BJ (cell line): ENCODE measurements at regions of chr12 and their contacts with region 1.

Region 1: GRCh38 chr12:15532364-15532977 is 210.2 kb downstream of the PTPRO start:
- DNase-seq: no peak
- H3K4me3 ChIP-seq: no peak overlapping the region
- H3K27me3 ChIP-seq: no peaks in the 10 kb centered on the region
- CTCF ChIP-seq: peak; percentile 66

Region 2: DNA sequence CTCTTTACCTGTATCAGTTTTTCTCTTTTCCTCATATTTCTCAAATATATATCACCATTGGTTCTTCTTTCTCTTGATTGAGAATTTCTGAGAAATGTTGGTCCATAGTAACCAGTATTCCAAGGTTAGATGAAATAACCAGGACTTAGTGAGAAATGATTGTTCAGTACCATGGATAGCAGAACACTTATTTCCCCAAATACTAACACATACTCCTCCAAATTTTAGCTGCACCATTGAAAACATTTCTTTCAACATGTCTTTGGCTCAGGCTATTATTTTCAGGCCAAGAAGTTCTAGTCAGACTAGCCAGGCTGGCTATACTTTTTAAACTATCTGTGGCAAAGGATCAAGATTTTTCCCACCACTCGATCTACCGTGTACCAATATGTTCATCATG is 96.9 kb before region 1 on chr12:
- CTCF ChIA-PET with region 1: no interaction called
- POLR2A ChIA-PET with region 1: no interaction called
- DNase-seq: no peak
- H3K4me3 ChIP-seq: no peak overlapping the region
- H3K27me3 ChIP-seq: no peaks in the 10 kb centered on the region
- CTCF ChIP-seq: no peak

Region 3: DNA sequence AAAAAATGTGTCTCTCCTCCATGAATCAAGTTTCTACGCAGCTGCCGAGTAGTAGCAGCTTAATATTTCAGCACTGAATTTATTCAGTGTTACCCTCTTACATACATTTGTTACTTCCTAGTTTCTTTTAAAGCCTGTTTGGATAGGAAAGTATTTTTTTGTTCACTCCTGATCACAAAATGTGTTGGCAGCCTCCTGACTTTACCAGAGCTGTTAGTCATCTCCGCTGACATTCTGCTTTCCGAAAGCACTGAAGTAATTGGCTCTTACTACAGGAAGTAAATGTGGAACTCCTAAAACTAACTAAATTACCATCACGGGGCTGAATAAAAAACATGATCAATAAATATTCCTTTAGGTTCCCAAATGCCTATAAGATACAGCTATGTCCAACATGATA is 31.2 kb after region 1 on chr12:
- CTCF ChIA-PET with region 1: interaction called, 24 read pairs
- POLR2A ChIA-PET with region 1: no interaction called
- DNase-seq: no peak
- H3K4me3 ChIP-seq: no peak overlapping the region
- H3K27me3 ChIP-seq: no peaks in the 10 kb centered on the region
- CTCF ChIP-seq: no peak

Region 4: DNA sequence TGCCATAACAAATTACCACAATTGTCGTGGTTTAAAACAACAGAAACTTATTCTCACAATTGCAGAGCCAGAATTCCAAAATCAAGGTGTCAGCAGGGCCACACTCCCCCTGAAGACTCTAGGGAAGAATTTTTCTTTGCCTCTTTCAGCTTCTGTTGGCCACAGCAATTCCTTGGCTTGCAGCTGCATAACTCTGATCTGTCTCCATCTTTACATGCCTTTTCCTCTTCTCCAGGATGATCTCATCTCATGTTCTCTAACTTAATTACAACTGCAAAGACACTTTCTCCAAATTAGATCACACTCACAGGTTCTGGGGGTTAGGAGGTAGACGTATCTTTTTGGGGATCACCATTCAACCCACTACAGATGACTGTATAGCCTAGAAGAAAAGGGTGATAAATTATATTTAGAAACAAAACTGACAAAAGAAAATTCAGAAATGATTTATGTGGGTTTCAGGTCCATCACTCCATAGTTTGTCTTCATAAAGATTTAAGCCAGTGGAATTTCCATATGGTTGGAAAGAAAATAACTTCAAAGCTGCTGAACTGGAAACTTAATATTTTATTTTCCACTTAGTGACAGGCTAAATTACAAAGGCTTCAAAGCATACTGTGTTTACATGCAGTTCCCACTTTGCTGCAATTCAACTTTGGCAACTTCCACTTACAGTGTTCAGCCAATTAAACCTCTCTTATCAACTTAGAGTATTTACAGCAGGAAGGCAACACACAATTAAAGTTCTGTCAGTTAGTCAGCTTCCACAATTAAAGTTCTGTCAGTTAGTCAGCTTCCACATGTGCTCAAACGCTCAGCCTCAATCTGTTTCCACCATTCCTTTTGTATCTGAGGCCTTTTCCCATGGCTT is 43.4 kb after region 1 on chr12:
- CTCF ChIA-PET with region 1: interaction called, 254 read pairs
- POLR2A ChIA-PET with region 1: no interaction called
- DNase-seq: no peak
- H3K4me3 ChIP-seq: no peak overlapping the region
- H3K27me3 ChIP-seq: no peaks in the 10 kb centered on the region
- CTCF ChIP-seq: no peak

Region 5: DNA sequence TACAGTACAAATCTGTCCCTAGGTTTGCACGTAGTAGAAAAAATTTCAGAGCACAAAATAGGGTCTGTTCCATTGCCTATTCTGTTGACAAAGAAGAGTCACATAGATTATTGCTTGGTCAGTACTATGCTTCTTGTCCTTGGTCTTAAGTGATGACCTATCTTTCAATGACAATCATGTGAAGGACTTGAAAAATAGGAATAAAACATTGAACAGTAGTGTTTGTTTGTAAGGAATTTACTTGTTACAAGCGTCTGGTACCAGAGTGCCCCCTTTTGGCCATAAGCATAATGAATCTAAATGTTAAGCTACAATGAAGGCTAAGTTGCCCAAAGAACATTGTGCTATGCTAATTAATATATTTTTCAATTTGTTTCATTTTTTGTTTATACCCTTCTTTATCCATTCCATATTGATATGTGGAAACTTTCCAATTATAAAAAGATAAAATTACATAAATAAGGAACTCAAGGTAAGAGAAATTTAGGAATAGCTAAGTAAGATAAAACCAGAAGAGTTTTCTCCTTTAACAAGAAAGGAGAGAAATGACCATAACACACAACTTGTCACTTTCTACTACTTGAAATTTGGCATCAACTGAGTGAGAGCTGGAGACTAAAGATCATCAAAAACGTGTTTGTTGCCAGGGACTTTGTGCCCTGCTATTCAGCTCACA is 52.0 kb after region 1 on chr12:
- CTCF ChIA-PET with region 1: interaction called, 254 read pairs
- POLR2A ChIA-PET with region 1: interaction called, 5 read pairs
- DNase-seq: no peak
- H3K4me3 ChIP-seq: no peak overlapping the region
- H3K27me3 ChIP-seq: no peaks in the 10 kb centered on the region
- CTCF ChIP-seq: peak; percentile 74

Region 6: GRCh38 chr12:15590180-15590826 is 57.8 kb after region 1 on chr12:
- CTCF ChIA-PET with region 1: interaction called, 254 read pairs
- POLR2A ChIA-PET with region 1: no interaction called
- DNase-seq: no peak
- H3K4me3 ChIP-seq: peak overlapping the region; percentile 29
- H3K27me3 ChIP-seq: no peaks in the 10 kb centered on the region
- CTCF ChIP-seq: peak; percentile 88

Region 7: GRCh38 chr12:15856097-15856982 is 323.9 kb after region 1 on chr12:
- CTCF ChIA-PET with region 1: interaction called, 24 read pairs
- POLR2A ChIA-PET with region 1: no interaction called
- DNase-seq: no peak
- H3K4me3 ChIP-seq: no peak overlapping the region
- H3K27me3 ChIP-seq: no peaks in the 10 kb centered on the region
- CTCF ChIP-seq: peak; percentile 62